Lower leg skin (tissue), 4 donors: ENCODE measurements at regions of chr17 and their contacts with region 1.

Region 1: GRCh38 chr17:32794533-32795246 is 82.2 kb downstream of the MYO1D start:
- DNase-seq: no peak
- H3K4me3 ChIP-seq: no peak overlapping the region
- CTCF ChIP-seq: no peak
- POLR2A ChIP-seq: no peak

Region 2: DNA sequence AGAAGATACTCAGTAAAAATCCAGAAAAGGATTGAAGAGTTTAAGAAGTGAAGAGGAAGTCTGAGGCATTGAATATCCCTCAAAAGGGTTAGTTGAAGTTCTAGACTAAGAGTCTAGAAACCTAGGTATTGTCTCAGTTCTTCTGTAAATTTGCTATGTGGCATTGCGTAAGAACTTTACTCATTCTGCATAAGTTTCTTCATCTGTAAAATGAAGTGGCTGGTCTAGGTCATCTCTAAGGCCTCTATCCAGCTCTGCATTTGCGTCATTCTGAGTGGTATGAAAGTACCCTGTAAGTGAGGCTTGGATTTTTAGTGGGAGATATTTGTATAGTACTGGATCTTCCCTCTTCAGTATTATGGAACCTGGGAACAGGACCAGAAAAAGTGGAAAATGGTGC is 48.0 kb before region 1 on chr17:
- intact Hi-C with region 1: no loop called
- DNase-seq: no peak
- H3K4me3 ChIP-seq: no peak overlapping the region
- CTCF ChIP-seq: no peak
- POLR2A ChIP-seq: no peak

Region 3: GRCh38 chr17:32854207-32854606 is 59.5 kb after region 1 on chr17:
- intact Hi-C with region 1: no loop called
- DNase-seq: no peak
- H3K4me3 ChIP-seq: no peak overlapping the region
- CTCF ChIP-seq: no peak
- POLR2A ChIP-seq: no peak

Region 4: GRCh38 chr17:32909787-32910369 is 115.2 kb after region 1 on chr17:
- intact Hi-C with region 1: loop called (anchors 10 kb)
- DNase-seq: peak in 1 of 2 donors; percentile 87
- H3K4me3 ChIP-seq: no peak overlapping the region
- CTCF ChIP-seq: peak in 1 of 3 donors; percentile 45
- POLR2A ChIP-seq: no peak